ENCODE measurements at regions of chr7 and their contacts with region 1.

Region 1: GRCh38 chr7:141014524-141015395 is at the start of gene MRPS33:
- DNase-seq: peak; percentile 97
- ATAC-seq: peak; percentile 100
- H3K4me3 ChIP-seq: peak within 1 kb of the TSS; percentile 70
- H3K27ac ChIP-seq: peak within 1 kb of the TSS; percentile 83
- H3K4me1 ChIP-seq: no peaks in the 10 kb centered on the region
- H3K27me3 ChIP-seq: peaks cover 5% of the 10 kb centered on the region
- CTCF ChIP-seq: peak; percentile 39
- total RNA-seq, gene MRPS33: 27.4 TPM

Region 2: GRCh38 chr7:140297192-140297591 is 717.6 kb before region 1 on chr7:
- intact Hi-C with region 1: no loop called
- DNase-seq: no peak
- ATAC-seq: no peak
- H3K4me3 ChIP-seq: no peak overlapping the region
- H3K27ac ChIP-seq: no peak overlapping the region
- H3K4me1 ChIP-seq: no peaks in the 10 kb centered on the region
- H3K27me3 ChIP-seq: no peaks in the 10 kb centered on the region
- CTCF ChIP-seq: no peak

Region 3: DNA sequence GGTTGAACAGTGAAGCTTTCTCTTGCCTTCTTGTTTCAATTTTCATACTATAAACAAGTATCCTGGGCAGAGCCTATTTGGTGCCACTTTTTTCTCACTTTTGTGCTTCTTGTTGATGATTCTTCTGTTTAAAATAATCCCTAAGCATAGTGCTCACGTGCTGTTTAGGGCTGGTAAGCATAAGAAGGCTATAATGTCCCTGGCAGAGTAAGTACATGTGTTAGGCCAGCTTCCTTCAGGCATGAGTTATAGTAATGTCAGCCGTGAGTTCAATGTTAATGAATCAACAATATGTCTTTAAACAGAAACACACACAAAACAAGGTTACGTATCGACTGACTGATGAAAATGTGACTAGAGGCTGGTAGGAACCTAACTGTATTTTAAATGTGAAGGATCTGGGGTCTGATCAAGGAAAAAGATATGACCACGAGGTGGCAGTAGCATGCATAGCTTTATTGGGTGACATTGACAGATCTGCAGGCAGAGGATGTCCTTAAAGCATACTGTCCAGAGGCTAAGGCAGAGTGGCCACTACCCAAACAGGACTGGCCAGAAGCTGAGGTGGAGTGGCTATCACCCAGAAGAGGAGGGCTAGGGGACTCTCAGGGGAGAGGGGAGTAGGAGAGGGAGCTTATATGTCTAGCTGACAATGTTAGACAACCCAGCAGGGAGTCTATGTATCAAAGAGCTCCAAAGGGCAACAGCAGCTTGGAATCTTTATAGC is 203.8 kb before region 1 on chr7:
- intact Hi-C with region 1: loop called (anchors 5 kb)
- DNase-seq: no peak
- ATAC-seq: peak; percentile 97
- H3K4me3 ChIP-seq: no peak overlapping the region
- H3K27ac ChIP-seq: no peak overlapping the region
- H3K4me1 ChIP-seq: no peaks in the 10 kb centered on the region
- H3K27me3 ChIP-seq: no peaks in the 10 kb centered on the region
- CTCF ChIP-seq: peak; percentile 74

Region 4: GRCh38 chr7:141072548-141073172 is 57.9 kb after region 1 on chr7:
- intact Hi-C with region 1: no loop called
- DNase-seq: peak; percentile 65
- ATAC-seq: peak; percentile 38
- H3K4me3 ChIP-seq: peak overlapping the region; percentile 52
- H3K27ac ChIP-seq: no peak overlapping the region
- H3K4me1 ChIP-seq: peaks cover 25% of the 10 kb centered on the region
- H3K27me3 ChIP-seq: peaks cover 58% of the 10 kb centered on the region
- CTCF ChIP-seq: no peak

Region 5: GRCh38 chr7:141402277-141402996 is 387.7 kb after region 1 on chr7:
- intact Hi-C with region 1: no loop called
- DNase-seq: no peak
- ATAC-seq: no peak
- H3K4me3 ChIP-seq: no peak overlapping the region
- H3K27ac ChIP-seq: no peak overlapping the region
- H3K4me1 ChIP-seq: no peaks in the 10 kb centered on the region
- H3K27me3 ChIP-seq: no peaks in the 10 kb centered on the region
- CTCF ChIP-seq: no peak